A673 (cell line): ENCODE measurements at regions of chr13 and their contacts with region 1.

Region 1: GRCh38 chr13:78137404-78138142 is 218.9 kb upstream of the EDNRB start:
- DNase-seq: peak; percentile 86
- H3K4me3 ChIP-seq: no peak overlapping the region
- H3K27ac ChIP-seq: no peak overlapping the region
- H3K4me1 ChIP-seq: no peaks in the 10 kb centered on the region
- H3K27me3 ChIP-seq: no peaks in the 10 kb centered on the region
- CTCF ChIP-seq: peak; percentile 76

Region 2: DNA sequence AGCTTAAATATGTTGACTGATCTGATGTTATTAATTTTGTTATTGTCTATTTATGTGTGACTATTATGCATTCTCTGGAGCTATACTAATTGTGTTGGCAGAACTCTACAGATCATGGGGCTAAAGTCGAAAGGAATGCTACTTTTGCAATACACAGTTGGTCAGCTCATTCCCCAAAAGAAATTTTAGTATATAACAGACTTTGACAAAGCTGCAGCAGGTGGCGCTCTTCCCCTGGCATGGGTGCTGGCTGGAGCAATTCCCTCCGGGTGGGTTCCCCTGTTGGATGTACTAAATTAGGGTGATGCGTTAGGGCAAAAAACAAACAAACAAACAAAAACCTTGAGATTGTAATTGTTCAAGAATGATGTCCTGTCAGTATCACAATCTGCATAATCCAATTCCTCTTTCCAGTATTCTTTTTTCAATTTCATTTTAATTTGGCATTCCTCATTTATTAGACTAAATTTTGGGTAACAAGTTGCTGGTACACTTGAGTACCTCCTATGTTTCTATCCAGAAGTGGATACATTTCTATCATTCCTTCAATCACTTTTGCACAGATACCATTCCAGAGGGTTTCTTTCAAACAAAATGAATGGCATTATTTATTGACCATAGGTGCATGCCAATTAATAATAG is 103.8 kb after region 1 on chr13:
- CTCF ChIA-PET with region 1: interaction called, 4 read pairs
- POLR2A ChIA-PET with region 1: no interaction called
- intact Hi-C with region 1: loop called (anchors 5 kb)
- DNase-seq: peak; percentile 73
- H3K4me3 ChIP-seq: no peak overlapping the region
- H3K27ac ChIP-seq: no peak overlapping the region
- H3K4me1 ChIP-seq: no peaks in the 10 kb centered on the region
- H3K27me3 ChIP-seq: no peaks in the 10 kb centered on the region
- CTCF ChIP-seq: peak; percentile 90

Region 3: GRCh38 chr13:78595495-78596398 is 458.2 kb after region 1 on chr13:
- CTCF ChIA-PET with region 1: no interaction called
- POLR2A ChIA-PET with region 1: no interaction called
- intact Hi-C with region 1: loop called (anchors 5 kb)
- DNase-seq: peak; percentile 52
- H3K4me3 ChIP-seq: peak overlapping the region; percentile 43
- H3K27ac ChIP-seq: no peak overlapping the region
- H3K4me1 ChIP-seq: peaks cover 5% of the 10 kb centered on the region
- H3K27me3 ChIP-seq: peaks cover 99% of the 10 kb centered on the region
- CTCF ChIP-seq: no peak

Region 4: DNA sequence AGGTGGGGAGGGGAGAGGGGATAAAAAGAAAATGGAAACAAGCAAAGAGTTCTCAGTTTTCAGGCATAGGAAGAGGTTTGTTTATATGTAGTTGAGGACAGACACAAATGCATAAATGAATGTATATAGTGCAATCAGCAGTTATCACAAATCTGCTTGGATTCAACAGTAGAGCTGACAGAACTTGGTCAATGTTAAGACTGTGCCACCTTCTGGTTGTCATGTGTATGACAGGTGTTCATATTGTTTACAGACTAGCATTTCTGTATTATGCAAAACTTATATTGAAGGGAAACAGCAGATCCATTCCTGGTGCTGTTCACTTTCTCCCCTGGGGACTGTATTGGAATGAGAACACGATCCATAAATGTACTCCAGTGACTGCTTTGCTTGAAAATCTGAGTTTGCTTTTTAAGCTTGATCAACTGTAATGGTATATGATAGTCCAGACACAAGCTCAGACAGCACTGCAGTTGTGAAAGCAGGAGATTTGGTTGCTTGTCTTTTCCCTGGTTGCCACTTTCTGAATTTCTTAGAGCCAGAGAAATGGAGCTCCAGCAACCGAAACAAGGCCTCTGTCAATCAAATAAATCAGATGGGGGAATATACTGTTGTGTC is 840.9 kb after region 1 on chr13:
- CTCF ChIA-PET with region 1: interaction called, 11 read pairs
- POLR2A ChIA-PET with region 1: no interaction called
- intact Hi-C with region 1: loop called (anchors 1 kb)
- DNase-seq: peak; percentile 76
- H3K4me3 ChIP-seq: no peak overlapping the region
- H3K27ac ChIP-seq: no peak overlapping the region
- H3K4me1 ChIP-seq: no peaks in the 10 kb centered on the region
- H3K27me3 ChIP-seq: peaks cover 9% of the 10 kb centered on the region
- CTCF ChIP-seq: peak; percentile 77

Region 5: GRCh38 chr13:79541426-79542049 is 1404.0 kb after region 1 on chr13:
- CTCF ChIA-PET with region 1: no interaction called
- POLR2A ChIA-PET with region 1: no interaction called
- intact Hi-C with region 1: loop called (anchors 5 kb)
- DNase-seq: peak; percentile 73
- H3K4me3 ChIP-seq: no peak overlapping the region
- H3K27ac ChIP-seq: no peak overlapping the region
- H3K4me1 ChIP-seq: no peaks in the 10 kb centered on the region
- H3K27me3 ChIP-seq: no peaks in the 10 kb centered on the region
- CTCF ChIP-seq: peak; percentile 80